ENCODE measurements at regions of chr4 and their contacts with region 1.

Region 1: GRCh38 chr4:37452952-37453280 is 208.4 kb downstream of the NWD2 start:
- DNase-seq: no peak
- ATAC-seq: peak; percentile 62 to 77
- H3K4me3 ChIP-seq: peak overlapping the region; percentile 51
- H3K27ac ChIP-seq: no peak overlapping the region
- H3K4me1 ChIP-seq: no peaks in the 10 kb centered on the region
- H3K27me3 ChIP-seq: peaks cover 3% of the 10 kb centered on the region

Region 2: GRCh38 chr4:37561803-37562207 is 108.9 kb after region 1 on chr4:
- intact Hi-C with region 1: loop called in 2 of 4 experiments (anchors 5 to 10 kb)
- DNase-seq: no peak
- ATAC-seq: no peak
- H3K4me3 ChIP-seq: no peak overlapping the region
- H3K27ac ChIP-seq: no peak overlapping the region
- H3K4me1 ChIP-seq: no peaks in the 10 kb centered on the region
- H3K27me3 ChIP-seq: no peaks in the 10 kb centered on the region

Region 3: DNA sequence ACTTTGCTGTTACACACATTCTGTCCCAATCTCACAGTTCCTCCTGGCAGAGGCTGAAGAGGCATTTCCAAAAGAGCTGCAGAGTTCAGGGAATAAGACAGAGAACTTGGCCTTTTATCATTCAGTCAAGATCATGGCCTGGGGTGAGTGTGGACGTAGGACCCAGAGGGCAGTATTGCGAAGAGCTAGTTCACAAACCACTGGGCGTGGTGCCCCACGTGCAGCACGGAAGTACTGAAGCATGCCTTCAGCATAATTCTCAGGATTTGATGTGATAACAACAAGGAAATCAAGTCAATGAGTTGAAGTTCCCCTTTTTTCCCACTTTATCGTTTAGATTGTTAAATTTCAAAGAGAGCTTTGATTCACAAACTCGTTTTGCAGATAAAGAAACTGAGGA is 115.6 kb after region 1 on chr4:
- intact Hi-C with region 1: loop called in 2 of 4 experiments (anchors 5 to 10 kb)
- DNase-seq: no peak
- ATAC-seq: no peak
- H3K4me3 ChIP-seq: no peak overlapping the region
- H3K27ac ChIP-seq: no peak overlapping the region
- H3K4me1 ChIP-seq: no peaks in the 10 kb centered on the region
- H3K27me3 ChIP-seq: no peaks in the 10 kb centered on the region

Region 4: GRCh38 chr4:37793562-37793961 is 340.6 kb after region 1 on chr4:
- intact Hi-C with region 1: loop called in 1 of 4 experiments (anchors 10 kb)
- DNase-seq: no peak
- ATAC-seq: peak; percentile 74 to 84
- H3K4me3 ChIP-seq: no peak overlapping the region
- H3K27ac ChIP-seq: no peak overlapping the region
- H3K4me1 ChIP-seq: no peaks in the 10 kb centered on the region
- H3K27me3 ChIP-seq: no peaks in the 10 kb centered on the region

Region 5: DNA sequence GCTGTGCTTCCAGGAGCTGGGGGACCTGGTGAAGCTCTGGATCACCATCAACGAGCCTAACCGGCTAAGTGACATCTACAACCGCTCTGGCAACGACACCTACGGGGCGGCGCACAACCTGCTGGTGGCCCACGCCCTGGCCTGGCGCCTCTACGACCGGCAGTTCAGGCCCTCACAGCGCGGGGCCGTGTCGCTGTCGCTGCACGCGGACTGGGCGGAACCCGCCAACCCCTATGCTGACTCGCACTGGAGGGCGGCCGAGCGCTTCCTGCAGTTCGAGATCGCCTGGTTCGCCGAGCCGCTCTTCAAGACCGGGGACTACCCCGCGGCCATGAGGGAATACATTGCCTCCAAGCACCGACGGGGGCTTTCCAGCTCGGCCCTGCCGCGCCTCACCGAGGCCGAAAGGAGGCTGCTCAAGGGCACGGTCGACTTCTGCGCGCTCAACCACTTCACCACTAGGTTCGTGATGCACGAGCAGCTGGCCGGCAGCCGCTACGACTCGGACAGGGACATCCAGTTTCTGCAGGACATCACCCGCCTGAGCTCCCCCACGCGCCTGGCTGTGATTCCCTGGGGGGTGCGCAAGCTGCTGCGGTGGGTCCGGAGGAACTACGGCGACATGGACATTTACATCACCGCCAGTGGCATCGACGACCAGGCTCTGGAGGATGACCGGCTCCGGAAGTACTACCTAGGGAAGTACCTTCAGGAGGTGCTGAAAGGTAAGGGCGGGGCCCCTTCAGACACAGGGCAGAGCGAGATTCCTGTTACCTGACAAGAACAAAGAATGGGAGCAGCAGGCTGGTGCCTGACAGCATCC is 1994.0 kb after region 1 on chr4:
- intact Hi-C with region 1: no loop called
- DNase-seq: peak; percentile 71 to 87 (median 84)
- ATAC-seq: peak; percentile 87
- H3K4me3 ChIP-seq: peak overlapping the region; percentile 33
- H3K27ac ChIP-seq: no peak overlapping the region
- H3K4me1 ChIP-seq: no peaks in the 10 kb centered on the region
- H3K27me3 ChIP-seq: no peaks in the 10 kb centered on the region

Measured in right cardiac atrium (tissue), 5 donors.